Activated T-helper 1 cell treated with anti-CD3 and anti-CD28 coated beads, Interleukin-12 subunit alpha, Interleukin-12 subunit beta, Interleukin-2, Interleukin-4 antibody, amounts not matched to agents 30 ng/mL and 10 ng/mL and 1 ng/mL, durations not matched to agents 14 hours and 24 hours and 36 hours (primary cell): ENCODE measurements at regions of chr1 and their contacts with region 1.

Region 1: GRCh38 chr1:236603991-236604904 is at the start of gene HEATR1:
- DNase-seq: peak; percentile 85
- H3K4me3 Mint-ChIP-seq: peak within 1 kb of the TSS; percentile 98
- H3K27ac Mint-ChIP-seq: peak within 1 kb of the TSS; percentile 90
- H3K4me1 Mint-ChIP-seq: peaks cover 37% of the 10 kb centered on the region
- H3K27me3 Mint-ChIP-seq: peaks cover 8% of the 10 kb centered on the region
- total RNA-seq, gene HEATR1: 83.6 and 85.2 TPM in 2 replicates

Region 2: GRCh38 chr1:236120721-236121153 is 483.5 kb before region 1 on chr1:
- intact Hi-C with region 1: loop called (anchors 5 kb)
- DNase-seq: no peak
- H3K4me3 Mint-ChIP-seq: peak overlapping the region; percentile 57
- H3K27ac Mint-ChIP-seq: peak overlapping the region; percentile 36
- H3K4me1 Mint-ChIP-seq: peaks cover 28% of the 10 kb centered on the region
- H3K27me3 Mint-ChIP-seq: peaks cover 15% of the 10 kb centered on the region

Region 3: DNA sequence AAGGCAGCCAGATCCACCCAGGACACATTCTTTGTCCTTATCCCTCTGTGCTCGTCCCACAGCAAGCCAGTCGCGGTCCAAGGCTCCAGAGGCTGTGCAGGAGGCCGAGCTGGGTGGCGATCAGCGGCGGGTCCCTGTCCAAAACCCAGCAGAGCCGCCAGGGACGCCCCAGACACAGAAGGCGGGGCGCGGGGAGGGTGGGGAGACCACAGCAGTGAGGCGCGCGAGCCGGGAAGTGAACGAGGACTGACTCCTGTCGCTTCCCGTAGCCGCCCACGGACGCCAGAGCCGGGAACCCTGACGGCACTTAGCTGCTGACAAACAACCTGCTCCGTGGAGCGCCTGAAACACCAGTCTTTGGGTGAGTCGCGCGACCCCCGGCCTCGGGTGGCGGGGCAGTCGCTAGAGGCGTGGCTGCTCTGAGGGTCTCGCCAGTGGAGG is 80.5 kb before region 1 on chr1 and contains the start of gene LGALS8:
- intact Hi-C with region 1: loop called (anchors 1 kb)
- DNase-seq: peak; percentile 78
- H3K4me3 Mint-ChIP-seq: peak within 1 kb of the TSS; percentile 99
- H3K27ac Mint-ChIP-seq: peak within 1 kb of the TSS; percentile 100
- H3K4me1 Mint-ChIP-seq: peaks cover 36% of the 10 kb centered on the region
- H3K27me3 Mint-ChIP-seq: no peaks in the 10 kb centered on the region
- total RNA-seq, gene LGALS8: 56.6 and 66.2 TPM in 2 replicates

Region 4: DNA sequence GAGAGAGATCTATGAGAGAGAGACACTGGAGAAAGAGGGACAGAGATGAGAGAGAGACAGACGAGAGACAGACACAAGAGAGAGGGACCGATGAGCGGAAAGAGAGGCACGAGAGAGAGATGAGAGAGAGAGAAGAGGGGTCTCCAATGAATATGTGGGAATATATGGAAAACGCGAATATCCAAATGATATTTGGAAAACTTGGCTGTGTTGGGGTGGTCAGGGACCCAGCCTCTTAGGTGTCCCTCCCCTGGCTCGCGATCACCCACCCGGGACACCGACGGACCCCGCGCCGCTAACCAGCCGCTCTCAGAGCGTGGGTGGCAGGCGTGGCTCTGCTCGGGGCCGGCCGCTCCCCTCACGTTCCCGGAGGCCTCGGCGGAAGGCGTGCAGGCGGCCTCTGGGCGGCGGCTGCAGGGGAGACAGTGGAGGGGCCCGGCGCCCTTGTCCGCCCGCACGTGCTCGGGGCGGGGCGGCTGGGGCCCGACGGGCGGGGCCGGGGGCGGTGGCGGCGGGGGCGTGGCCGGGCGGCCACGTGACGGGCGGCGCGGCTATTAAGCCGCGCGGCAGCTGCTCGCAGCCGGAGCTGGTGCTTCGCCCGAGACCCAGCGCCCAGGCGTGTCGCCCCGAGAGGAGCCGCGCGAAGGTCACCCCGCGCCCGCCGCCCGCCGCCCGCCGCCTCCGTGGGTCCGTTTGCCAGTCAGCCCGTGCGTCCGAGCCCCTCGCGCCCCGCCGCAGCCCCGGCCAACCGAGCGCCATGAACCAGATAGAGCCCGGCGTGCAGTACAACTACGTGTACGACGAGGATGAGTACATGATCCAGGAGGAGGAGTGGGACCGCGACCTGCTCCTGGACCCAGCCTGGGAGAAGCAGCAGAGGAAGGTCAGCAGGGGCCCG is 81.9 kb after region 1 on chr1 and contains the start of gene ACTN2:
- intact Hi-C with region 1: loop called (anchors 5 kb)
- DNase-seq: peak; percentile 22
- H3K4me3 Mint-ChIP-seq: peak within 1 kb of the TSS; percentile 66
- H3K27ac Mint-ChIP-seq: no peak within 1 kb of the TSS
- H3K4me1 Mint-ChIP-seq: peaks cover 8% of the 10 kb centered on the region
- H3K27me3 Mint-ChIP-seq: peaks cover 49% of the 10 kb centered on the region
- total RNA-seq, gene ACTN2: 0.10 TPM in 1 of 2 replicates, not detected in the other

Region 5: DNA sequence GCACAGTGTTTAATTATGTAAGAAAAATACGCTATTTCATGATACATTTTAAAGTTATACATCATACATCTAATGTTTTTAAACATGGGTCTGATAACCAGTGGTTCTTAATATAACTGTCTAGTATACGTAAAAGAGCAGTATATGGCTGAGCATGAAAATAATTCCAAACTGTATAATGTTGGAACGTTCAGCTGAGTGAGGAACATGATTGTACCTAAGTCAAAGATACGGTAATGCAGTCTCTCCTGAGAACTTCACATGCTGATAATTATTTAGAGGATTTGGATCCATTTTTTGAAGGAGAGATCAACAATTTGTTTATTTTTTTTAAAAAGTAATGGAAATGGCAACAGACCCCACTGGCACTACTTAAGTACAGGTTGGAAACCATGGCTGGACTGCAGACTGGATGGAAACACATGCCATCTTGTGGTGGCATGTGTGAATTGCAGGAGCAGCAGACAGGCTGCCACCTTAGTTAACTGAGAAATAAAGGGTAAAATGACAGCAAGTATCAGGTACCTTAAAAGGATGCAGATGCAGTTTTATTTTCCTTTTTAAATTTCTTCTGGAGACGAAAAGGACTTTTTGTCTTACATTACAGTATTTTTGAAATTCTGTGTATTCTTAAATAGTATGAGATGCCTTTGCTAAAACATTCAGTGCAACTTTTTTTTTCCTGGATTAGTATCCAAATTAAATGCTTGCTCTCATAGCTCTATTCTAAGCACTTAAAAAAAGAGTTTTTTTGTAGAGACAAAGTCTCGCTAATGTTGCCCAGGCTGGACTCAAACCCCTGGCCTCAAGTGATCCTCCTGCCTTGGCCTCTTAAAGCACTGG is 264.6 kb after region 1 on chr1:
- intact Hi-C with region 1: loop called (anchors 2 kb)
- DNase-seq: peak; percentile 14
- H3K4me3 Mint-ChIP-seq: no peak overlapping the region
- H3K27ac Mint-ChIP-seq: no peak overlapping the region
- H3K4me1 Mint-ChIP-seq: peaks cover 18% of the 10 kb centered on the region
- H3K27me3 Mint-ChIP-seq: no peaks in the 10 kb centered on the region

Region 6: DNA sequence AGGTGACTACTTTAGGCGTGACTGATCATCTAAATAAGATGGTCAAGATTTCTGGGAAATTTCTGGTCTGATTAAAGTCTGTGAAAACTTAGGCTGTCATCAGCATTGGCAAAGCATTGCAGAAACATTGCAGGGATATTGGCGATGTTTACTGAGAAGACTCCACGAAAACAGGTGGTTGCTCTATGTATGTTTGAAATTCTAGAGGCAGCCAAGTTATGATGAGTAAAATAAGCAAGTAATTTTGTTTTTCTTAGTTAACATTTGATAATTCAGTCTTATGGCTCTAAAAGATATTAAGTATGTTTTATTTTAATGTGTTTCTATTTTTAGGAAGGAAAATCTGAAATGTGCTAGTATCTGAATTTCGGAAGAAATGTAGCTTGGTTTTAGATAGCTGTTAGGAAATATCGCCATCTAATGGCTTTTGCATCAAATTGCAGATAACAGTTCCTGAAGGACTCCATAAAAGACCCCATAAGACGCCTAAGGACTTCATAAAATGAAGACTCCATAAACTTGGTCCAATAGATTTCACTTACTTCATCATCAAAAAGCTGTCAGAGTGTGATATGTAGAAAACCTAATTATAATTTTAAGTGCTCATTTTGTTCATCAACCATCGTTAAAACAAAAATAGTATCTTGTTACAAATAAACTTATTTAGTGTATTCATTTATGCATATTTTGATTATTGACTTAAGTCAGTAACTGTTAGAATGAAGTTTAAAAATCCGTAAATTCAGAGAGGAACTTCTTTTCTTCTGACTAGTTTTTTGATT is 782.3 kb after region 1 on chr1:
- intact Hi-C with region 1: loop called (anchors 5 kb)
- DNase-seq: no peak
- H3K4me3 Mint-ChIP-seq: no peak overlapping the region
- H3K27ac Mint-ChIP-seq: no peak overlapping the region
- H3K4me1 Mint-ChIP-seq: no peaks in the 10 kb centered on the region
- H3K27me3 Mint-ChIP-seq: no peaks in the 10 kb centered on the region